ENCODE measurements at regions of chr15 and their contacts with region 1.

Region 1: DNA sequence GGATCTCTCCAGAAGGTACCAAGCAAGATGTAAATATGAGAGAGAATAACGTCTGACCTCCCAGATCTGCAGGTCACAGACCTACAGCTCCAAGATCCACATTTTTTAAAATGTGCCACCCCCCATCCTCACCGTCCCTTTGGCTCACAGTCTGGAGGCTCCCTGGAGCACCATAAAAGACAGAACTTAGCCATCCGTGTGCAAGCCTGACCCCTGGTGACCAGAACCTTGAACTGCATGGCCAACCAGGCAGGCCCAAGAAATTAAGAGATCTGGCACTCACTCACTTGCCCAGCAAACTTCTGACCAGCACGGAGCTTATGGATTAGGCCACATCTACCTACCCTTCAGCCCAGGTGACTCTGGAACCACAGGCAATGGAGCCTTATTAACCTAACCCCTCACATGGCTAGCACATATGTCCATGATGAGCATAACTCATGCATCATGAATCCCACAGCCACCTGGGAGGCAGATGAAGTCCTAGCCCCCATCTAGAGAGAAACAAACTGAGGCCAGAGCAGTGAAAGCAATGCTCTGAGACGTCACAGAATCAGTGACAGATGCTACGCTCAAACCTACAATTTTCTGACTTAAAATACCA is 275.3 kb downstream of the UACA start:
- DNase-seq: peak; percentile 71 to 83
- H3K4me3 ChIP-seq: no peak overlapping the region
- H3K27ac ChIP-seq: no peak overlapping the region
- H3K4me1 ChIP-seq: peaks cover 0 to 16% (median 3%) of the 10 kb centered on the region in 4 donors
- H3K27me3 ChIP-seq: no peaks in the 10 kb centered on the region
- CTCF ChIP-seq: peak; percentile 94 to 96

Region 2: DNA sequence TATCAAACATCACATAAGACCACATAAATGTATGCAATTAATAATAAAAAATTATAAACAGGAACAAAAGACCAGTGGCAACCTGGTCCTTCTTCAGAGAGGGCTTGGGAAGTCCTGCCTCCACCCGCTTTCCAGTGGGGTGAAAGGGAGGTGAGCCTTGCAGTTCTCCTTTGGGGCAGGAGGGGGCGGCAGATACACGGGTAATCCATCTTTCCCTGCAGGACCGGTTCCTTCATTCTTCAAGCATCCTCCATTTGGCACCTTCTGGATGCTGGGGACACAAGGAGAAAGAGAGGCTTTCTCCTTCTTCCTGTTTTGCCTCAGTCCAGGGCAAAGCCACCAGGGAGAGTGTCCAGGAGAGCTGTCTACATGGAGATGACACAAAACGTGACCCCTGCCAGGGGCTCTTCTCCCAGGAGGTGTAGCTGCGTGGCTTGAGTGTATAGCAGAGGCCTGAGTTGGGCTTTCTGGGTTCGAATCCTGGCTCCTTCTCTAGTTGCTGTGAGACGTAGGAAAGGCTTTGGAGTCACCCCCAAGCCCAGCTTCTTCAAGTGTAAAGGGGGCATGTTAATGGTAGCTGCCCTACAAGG is 1012.2 kb before region 1 on chr15:
- intact Hi-C with region 1: loop called (anchors 10 kb)
- DNase-seq: peak; percentile 77 to 85
- H3K4me3 ChIP-seq: no peak overlapping the region
- H3K27ac ChIP-seq: no peak overlapping the region
- H3K4me1 ChIP-seq: peaks cover 0 to 5% (median 0%) of the 10 kb centered on the region in 4 donors
- H3K27me3 ChIP-seq: peaks cover 0 to 6% of the 10 kb centered on the region in 2 donors
- CTCF ChIP-seq: peak; percentile 89 to 94

Region 3: DNA sequence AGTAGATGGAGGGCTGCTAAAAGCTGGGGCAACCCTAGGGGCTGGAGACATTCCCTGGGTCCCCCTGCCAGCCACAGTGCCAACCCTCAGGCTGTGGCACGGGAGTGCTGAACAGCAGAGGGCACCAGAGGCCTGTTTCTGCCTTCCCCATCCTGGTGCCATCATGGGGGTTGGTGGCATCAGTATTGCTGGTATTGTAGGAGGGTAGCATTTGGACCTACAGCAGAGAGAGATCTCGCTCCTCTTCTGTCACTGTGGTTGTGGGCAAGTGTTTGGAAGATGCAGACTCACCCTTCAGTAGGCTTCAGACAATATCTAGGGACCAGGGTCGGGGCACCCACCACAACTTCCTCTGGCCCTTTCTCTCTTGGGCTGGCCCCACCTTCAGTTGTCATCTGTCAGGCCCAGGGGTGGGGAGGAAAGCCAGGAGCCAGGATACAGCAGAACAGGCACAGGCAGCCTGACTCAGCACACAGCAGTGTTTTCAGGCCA is 912.0 kb before region 1 on chr15:
- intact Hi-C with region 1: loop called (anchors 2 kb)
- DNase-seq: peak; percentile 45 to 78
- H3K4me3 ChIP-seq: no peak overlapping the region
- H3K27ac ChIP-seq: no peak overlapping the region
- H3K4me1 ChIP-seq: peaks cover 0 to 22% (median 11%) of the 10 kb centered on the region in 4 donors
- H3K27me3 ChIP-seq: no peaks in the 10 kb centered on the region
- CTCF ChIP-seq: peak; percentile 82 to 87

Region 4: DNA sequence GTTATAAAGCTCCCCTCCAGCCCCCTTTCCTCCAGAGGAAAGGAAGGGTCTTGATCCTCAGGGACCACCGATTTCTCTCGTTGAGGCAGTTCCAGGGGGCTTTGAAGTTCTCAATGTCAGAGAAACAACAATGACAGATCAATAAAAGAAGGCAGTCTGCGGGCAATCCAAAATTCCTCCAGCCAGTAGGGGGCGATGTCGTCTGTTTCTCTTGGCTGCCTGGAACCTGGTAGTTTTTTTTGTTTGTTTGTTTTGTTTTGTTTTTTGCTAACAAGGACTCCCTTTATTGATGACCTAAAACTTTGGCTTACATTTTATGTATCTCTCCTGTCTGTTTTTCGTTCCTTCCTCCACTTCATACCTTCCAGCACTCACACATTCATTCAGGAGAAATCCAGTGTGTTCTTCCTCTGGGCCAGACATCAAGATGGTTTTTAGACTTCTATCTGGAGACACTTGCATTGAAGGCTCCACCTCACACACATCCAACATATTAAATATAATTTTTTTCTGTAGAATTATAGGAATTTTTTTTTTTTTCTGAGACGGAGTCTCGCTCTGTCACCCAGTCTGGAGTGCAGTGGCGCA is 758.8 kb before region 1 on chr15:
- intact Hi-C with region 1: loop called (anchors 10 kb)
- DNase-seq: no peak
- H3K4me3 ChIP-seq: no peak overlapping the region
- H3K27ac ChIP-seq: no peak overlapping the region
- H3K4me1 ChIP-seq: no peaks in the 10 kb centered on the region
- H3K27me3 ChIP-seq: no peaks in the 10 kb centered on the region
- CTCF ChIP-seq: peak; percentile 62 to 64

Region 5: DNA sequence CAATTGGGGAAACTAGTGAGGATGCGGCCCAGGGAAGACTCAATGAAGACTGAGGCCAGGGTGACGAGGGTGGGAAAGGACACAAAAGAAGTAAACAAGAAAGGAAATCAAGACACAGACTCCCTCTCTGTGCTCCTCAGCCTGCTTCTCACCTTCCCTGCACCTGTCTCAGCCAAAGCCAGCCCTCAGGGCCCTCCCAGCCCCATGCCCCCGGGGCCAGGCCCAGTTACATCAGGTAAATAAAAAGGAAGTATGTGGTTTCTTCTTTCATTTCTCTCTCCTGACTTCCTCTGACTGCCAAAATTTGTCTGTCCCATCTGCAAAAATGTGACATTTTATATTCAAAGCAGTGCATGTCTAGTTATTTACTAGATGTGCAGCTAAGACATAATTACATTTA is 52.7 kb before region 1 on chr15:
- intact Hi-C with region 1: no loop called
- DNase-seq: peak in 1 of 2 donors; percentile 24
- H3K4me3 ChIP-seq: no peak overlapping the region
- H3K27ac ChIP-seq: no peak overlapping the region
- H3K4me1 ChIP-seq: no peaks in the 10 kb centered on the region
- H3K27me3 ChIP-seq: peaks cover 0 to 11% of the 10 kb centered on the region in 2 donors
- CTCF ChIP-seq: no peak